Dorsolateral prefrontal cortex (tissue), 120 donors: ENCODE measurements at regions of chr19 and their contacts with region 1.

Region 1: GRCh38 chr19:12333162-12334159 is at the start of gene ZNF563:
- DNase-seq: peak; percentile 96 to 99 (median 99)
- H3K4me3 ChIP-seq: peak within 1 kb of the TSS; percentile 52 to 99 (median 91)
- H3K27ac ChIP-seq: peak within 1 kb of the TSS in 58 of 59 donors; percentile 17 to 95 (median 82)
- H3K27me3 ChIP-seq: no peaks in the 10 kb centered on the region
- CTCF ChIP-seq: peak in 17 of 56 donors; percentile 4 to 45 (median 19)
- total RNA-seq, gene ZNF563: 2.7 to 11.4 (median 5.3) TPM

Region 2: GRCh38 chr19:12294249-12295158 is 39.0 kb before region 1 on chr19 and contains the start of gene ZNF44:
- intact Hi-C with region 1: loop called in 1 of 2 experiments (anchors 5 kb)
- DNase-seq: peak; percentile 93 to 99 (median 98)
- H3K4me3 ChIP-seq: peak within 1 kb of the TSS; percentile 71 to 100 (median 97)
- H3K27ac ChIP-seq: peak within 1 kb of the TSS in 56 of 59 donors; percentile 34 to 95 (median 82)
- H3K27me3 ChIP-seq: no peaks in the 10 kb centered on the region
- CTCF ChIP-seq: peak in 11 of 56 donors; percentile 6 to 36 (median 17)
- total RNA-seq, gene ZNF44: 8.7 to 28.5 (median 16.1) TPM